ENCODE measurements at regions of chr1 and their contacts with region 1.

Region 1: DNA sequence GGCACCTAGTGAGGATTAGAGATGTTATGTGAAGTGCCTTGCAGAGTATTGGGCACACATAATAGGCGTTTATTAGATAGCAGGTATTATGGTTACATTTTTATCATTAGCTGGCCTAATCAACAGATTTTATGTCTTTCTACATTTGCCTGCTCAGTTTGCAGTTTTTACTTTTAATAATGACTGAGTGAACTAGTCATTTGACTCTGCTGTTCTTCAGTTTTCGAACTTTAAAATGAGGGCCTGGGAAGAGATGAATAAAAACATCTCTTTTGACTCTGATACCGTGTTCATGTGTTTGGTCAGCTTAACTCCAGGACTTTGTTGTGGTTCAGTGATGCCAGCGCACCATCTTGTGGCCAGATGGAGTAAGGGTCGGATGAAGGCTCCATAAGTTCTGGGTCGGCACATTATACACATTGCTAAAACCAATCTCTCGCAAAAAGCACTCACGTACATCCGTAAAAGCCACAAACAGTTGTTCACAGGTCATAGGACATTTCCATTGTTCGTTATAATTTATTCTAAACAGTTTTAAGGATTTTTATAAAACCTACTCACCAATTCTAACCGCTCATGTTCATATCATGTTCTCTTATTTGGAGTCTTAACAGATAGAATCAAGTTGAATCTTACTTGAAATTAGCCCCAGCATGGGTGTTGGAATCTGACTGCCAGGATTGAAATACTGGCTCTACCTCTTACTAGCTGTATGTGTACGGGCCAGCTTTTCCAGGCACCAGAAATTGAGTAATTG is 78.4 kb upstream of the GPR88 start:
- DNase-seq: peak; percentile 57
- H3K4me3 ChIP-seq: no peak overlapping the region
- H3K27ac ChIP-seq: no peak overlapping the region
- H3K4me1 ChIP-seq: no peaks in the 10 kb centered on the region
- H3K27me3 ChIP-seq: no peaks in the 10 kb centered on the region
- CTCF ChIP-seq: peak; percentile 91

Region 2: DNA sequence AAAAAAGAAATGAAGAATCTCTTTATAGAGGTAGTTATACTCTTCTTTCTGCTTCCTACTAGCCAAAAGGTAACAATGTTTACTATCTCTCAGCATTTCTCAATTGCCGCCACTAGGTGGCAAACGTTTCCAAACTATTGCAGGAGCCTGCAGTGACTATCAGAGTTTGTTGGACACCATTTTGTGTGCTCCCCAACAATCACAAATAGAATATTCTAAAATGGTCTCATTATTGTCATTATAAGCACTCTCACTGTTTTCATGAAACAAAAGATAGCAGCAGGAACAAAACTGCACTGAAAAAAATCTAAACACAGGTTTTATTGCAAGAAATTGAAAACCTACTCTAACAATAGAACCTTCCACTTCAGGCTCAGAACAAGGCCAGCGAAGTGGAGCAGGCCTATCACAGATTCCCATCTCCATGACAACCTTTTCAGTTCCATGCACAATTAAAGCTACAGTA is 1279.2 kb before region 1 on chr1:
- CTCF ChIA-PET with region 1: no interaction called
- dilution Hi-C with region 1: no loop called
- in situ Hi-C with region 1: no loop called
- intact Hi-C with region 1: loop called (anchors 5 kb)
- DNase-seq: peak; percentile 62
- H3K4me3 ChIP-seq: no peak overlapping the region
- H3K27ac ChIP-seq: no peak overlapping the region
- H3K4me1 ChIP-seq: no peaks in the 10 kb centered on the region
- H3K27me3 ChIP-seq: no peaks in the 10 kb centered on the region
- CTCF ChIP-seq: peak; percentile 73 to 89

Region 3: GRCh38 chr1:99818063-99818699 is 641.4 kb before region 1 on chr1:
- CTCF ChIA-PET with region 1: no interaction called
- dilution Hi-C with region 1: no loop called
- in situ Hi-C with region 1: loop called (anchors 10 kb)
- intact Hi-C with region 1: no loop called
- DNase-seq: no peak
- H3K4me3 ChIP-seq: no peak overlapping the region
- H3K27ac ChIP-seq: no peak overlapping the region
- H3K4me1 ChIP-seq: peaks cover 11% of the 10 kb centered on the region
- H3K27me3 ChIP-seq: no peaks in the 10 kb centered on the region
- CTCF ChIP-seq: no peak

Region 4: GRCh38 chr1:100051401-100051800 is 408.1 kb before region 1 on chr1:
- CTCF ChIA-PET with region 1: interaction called, 14 read pairs
- dilution Hi-C with region 1: no loop called
- in situ Hi-C with region 1: no loop called
- intact Hi-C with region 1: no loop called
- DNase-seq: no peak
- H3K4me3 ChIP-seq: no peak overlapping the region
- H3K27ac ChIP-seq: no peak overlapping the region
- H3K4me1 ChIP-seq: peaks cover 30% of the 10 kb centered on the region
- H3K27me3 ChIP-seq: no peaks in the 10 kb centered on the region
- CTCF ChIP-seq: no peak

Region 5: GRCh38 chr1:100277866-100278265 is 181.7 kb before region 1 on chr1:
- CTCF ChIA-PET with region 1: interaction called, 15 read pairs
- dilution Hi-C with region 1: no loop called
- in situ Hi-C with region 1: no loop called
- intact Hi-C with region 1: loop called (anchors 1 kb)
- DNase-seq: no peak
- H3K4me3 ChIP-seq: no peak overlapping the region
- H3K27ac ChIP-seq: no peak overlapping the region
- H3K4me1 ChIP-seq: no peaks in the 10 kb centered on the region
- H3K27me3 ChIP-seq: no peaks in the 10 kb centered on the region
- CTCF ChIP-seq: peak; percentile 4 to 10

Region 6: DNA sequence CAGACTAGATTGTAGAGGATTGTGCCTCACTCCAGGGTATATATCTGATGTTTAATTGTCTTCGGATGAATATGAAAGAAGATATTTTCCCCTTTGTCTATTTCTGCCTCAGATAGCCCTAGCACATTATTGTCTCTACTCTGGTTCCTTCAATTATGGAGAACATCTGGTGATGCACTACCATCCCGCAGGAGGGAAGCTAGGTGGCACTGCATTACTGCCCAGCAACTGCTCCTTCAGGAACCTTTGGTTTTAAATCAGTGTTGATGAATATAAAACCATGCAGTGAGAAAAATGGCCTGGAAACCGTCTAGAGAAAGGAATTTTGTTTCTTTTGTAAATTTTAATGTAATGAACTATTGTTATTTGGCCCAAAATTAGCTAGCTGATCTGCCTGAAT is 146.9 kb after region 1 on chr1:
- CTCF ChIA-PET with region 1: interaction called, 4 read pairs
- dilution Hi-C with region 1: no loop called
- in situ Hi-C with region 1: no loop called
- intact Hi-C with region 1: loop called (anchors 1 kb)
- DNase-seq: peak; percentile 51
- H3K4me3 ChIP-seq: no peak overlapping the region
- H3K27ac ChIP-seq: no peak overlapping the region
- H3K4me1 ChIP-seq: peaks cover 10% of the 10 kb centered on the region
- H3K27me3 ChIP-seq: no peaks in the 10 kb centered on the region
- CTCF ChIP-seq: peak; percentile 77 to 95